ENCODE measurements at regions of chr20 and their contacts with region 1.

Region 1: DNA sequence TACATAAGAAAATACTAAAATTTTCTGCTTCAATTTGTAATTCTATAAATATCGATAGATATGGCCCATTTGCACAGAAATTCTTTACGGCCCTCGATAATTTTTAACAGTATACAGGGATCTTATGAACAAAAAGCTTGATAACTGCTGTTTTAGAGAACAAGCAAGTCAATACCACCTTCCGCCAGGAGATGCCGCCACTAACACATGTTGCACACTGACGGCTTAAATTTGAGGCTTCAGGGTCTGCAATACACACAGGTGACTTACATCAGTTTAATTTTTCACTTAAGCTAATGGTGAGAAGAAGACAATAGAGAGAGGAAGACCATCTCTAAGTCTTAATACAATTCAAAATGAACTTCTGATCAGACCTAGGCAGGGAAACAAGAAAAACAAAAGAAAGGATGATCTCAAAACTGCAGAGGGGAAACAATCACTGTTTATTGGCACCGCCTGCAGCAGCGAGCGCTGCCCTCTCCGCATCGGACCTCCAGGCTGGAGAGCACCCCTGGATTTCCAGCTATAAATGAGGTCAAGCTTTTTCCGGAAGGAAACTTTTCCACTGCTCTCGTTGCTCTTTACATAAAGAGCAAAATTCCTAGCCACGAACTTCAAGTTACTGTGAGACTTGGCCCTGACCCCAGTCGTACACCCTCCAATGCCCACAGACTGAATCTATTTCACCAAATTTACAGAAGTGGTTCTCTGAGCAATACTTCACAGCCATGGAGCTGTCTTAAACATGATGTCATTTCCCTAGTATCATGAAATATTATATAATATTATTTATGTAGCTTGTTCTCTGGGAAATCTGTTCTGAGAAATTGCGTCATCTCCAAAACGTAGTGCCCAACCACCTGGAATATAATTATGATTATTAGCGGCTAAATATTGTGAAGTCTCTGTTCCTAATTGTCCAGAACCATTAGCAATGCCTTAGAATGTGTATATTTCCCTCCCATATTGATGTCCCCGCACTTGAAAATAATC is 54.1 kb downstream of the OTOR start:
- DNase-seq: peak; percentile 64
- ATAC-seq: peak; percentile 68
- H3K4me3 ChIP-seq: peak overlapping the region; percentile 10 to 42; a peak in 3 of 4 replicates
- H3K27ac ChIP-seq: no peak overlapping the region
- H3K4me1 ChIP-seq: 0 out of 2 replicates have a peak, but pooled peaks cover 3% of the 10 kb centered on the region
- H3K27me3 ChIP-seq: peaks cover 32% of the 10 kb centered on the region
- CTCF ChIP-seq: peak; percentile 90

Region 2: GRCh38 chr20:16434062-16434664 is 368.1 kb before region 1 on chr20:
- CTCF ChIA-PET with region 1: no interaction called
- POLR2A ChIA-PET with region 1: no interaction called
- in situ Hi-C with region 1: no loop called
- intact Hi-C with region 1: no loop called
- DNase-seq: peak; percentile 32
- ATAC-seq: peak; percentile 78; the same call in 1 of the 2 replicates
- H3K4me3 ChIP-seq: no peak overlapping the region
- H3K27ac ChIP-seq: no peak overlapping the region
- H3K4me1 ChIP-seq: no peaks in the 10 kb centered on the region
- H3K27me3 ChIP-seq: no peaks in the 10 kb centered on the region
- CTCF ChIP-seq: peak; percentile 86

Region 3: DNA sequence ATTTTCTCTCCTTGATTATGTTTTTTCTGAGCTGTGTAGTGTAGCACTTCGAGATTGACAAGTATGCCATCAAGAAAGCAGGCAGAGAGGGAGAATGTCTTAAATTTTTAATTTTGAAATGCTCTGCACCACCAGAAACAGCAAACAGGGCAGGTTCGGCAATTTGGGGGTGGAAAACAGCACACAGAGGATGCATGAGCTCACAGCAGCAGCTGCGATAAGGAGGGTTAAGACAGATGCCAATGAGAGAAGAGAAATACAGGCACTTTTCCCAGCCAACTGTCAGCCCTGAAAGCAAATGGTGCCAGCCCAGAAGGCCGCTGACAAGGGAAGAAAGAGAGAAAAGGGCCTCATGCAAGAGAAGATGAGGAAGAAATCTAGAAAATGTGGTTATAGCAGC is 87.5 kb before region 1 on chr20:
- CTCF ChIA-PET with region 1: no interaction called
- POLR2A ChIA-PET with region 1: no interaction called
- in situ Hi-C with region 1: no loop called
- intact Hi-C with region 1: no loop called
- DNase-seq: no peak
- ATAC-seq: no peak
- H3K4me3 ChIP-seq: no peak overlapping the region
- H3K27ac ChIP-seq: no peak overlapping the region
- H3K4me1 ChIP-seq: no peaks in the 10 kb centered on the region
- H3K27me3 ChIP-seq: peaks cover 4% of the 10 kb centered on the region; the same call in 1 of the 2 replicates
- CTCF ChIP-seq: no peak

Region 4: GRCh38 chr20:16761305-16761829 is 40.8 kb before region 1 on chr20:
- CTCF ChIA-PET with region 1: no interaction called
- POLR2A ChIA-PET with region 1: no interaction called
- in situ Hi-C with region 1: no loop called
- intact Hi-C with region 1: no loop called
- DNase-seq: peak; percentile 64
- ATAC-seq: peak; percentile 88
- H3K4me3 ChIP-seq: no peak overlapping the region
- H3K27ac ChIP-seq: no peak overlapping the region
- H3K4me1 ChIP-seq: no peaks in the 10 kb centered on the region
- H3K27me3 ChIP-seq: peaks cover 17% of the 10 kb centered on the region
- CTCF ChIP-seq: peak; percentile 81

Region 5: GRCh38 chr20:16821211-16822089 is 19.2 kb after region 1 on chr20:
- CTCF ChIA-PET with region 1: interaction called, 5 read pairs
- POLR2A ChIA-PET with region 1: no interaction called
- in situ Hi-C with region 1: no loop called
- intact Hi-C with region 1: loop called (anchors 1 kb)
- DNase-seq: peak; percentile 45
- ATAC-seq: 0 out of 2 replicates have a peak, but pooled peaks have one; percentile 48
- H3K4me3 ChIP-seq: no peak overlapping the region
- H3K27ac ChIP-seq: no peak overlapping the region
- H3K4me1 ChIP-seq: no peaks in the 10 kb centered on the region
- H3K27me3 ChIP-seq: peaks cover 3% of the 10 kb centered on the region
- CTCF ChIP-seq: peak; percentile 94

Region 6: GRCh38 chr20:17281478-17281877 is 479.3 kb after region 1 on chr20:
- CTCF ChIA-PET with region 1: no interaction called
- POLR2A ChIA-PET with region 1: no interaction called
- in situ Hi-C with region 1: no loop called
- intact Hi-C with region 1: loop called (anchors 10 kb)
- DNase-seq: no peak
- ATAC-seq: no peak
- H3K4me3 ChIP-seq: no peak overlapping the region
- H3K27ac ChIP-seq: no peak overlapping the region
- H3K4me1 ChIP-seq: no peaks in the 10 kb centered on the region
- H3K27me3 ChIP-seq: 0 out of 2 replicates have a peak, but pooled peaks cover 2% of the 10 kb centered on the region
- CTCF ChIP-seq: peak; percentile 51

Region 7: GRCh38 chr20:17431621-17432364 is 629.6 kb after region 1 on chr20:
- CTCF ChIA-PET with region 1: interaction called, 13 read pairs
- POLR2A ChIA-PET with region 1: no interaction called
- in situ Hi-C with region 1: no loop called
- intact Hi-C with region 1: loop called (anchors 1 kb)
- DNase-seq: peak; percentile 24
- ATAC-seq: peak; percentile 62
- H3K4me3 ChIP-seq: no peak overlapping the region
- H3K27ac ChIP-seq: no peak overlapping the region
- H3K4me1 ChIP-seq: no peaks in the 10 kb centered on the region
- H3K27me3 ChIP-seq: peaks cover 11% of the 10 kb centered on the region
- CTCF ChIP-seq: peak; percentile 94

Measured in Panc1 (cell line).